HepG2 (cell line): ENCODE measurements at regions of chr5 and their contacts with region 1.

Region 1: GRCh38 chr5:58022055-58022454 is 437.8 kb downstream of the PLK2 start:
- DNase-seq: no peak
- ATAC-seq: no peak
- H3K4me3 ChIP-seq: no peak overlapping the region
- H3K27ac ChIP-seq: no peak overlapping the region
- H3K4me1 ChIP-seq: no peaks in the 10 kb centered on the region
- H3K27me3 ChIP-seq: no peaks in the 10 kb centered on the region
- CTCF ChIP-seq: no peak
- EP300 ChIP-seq: no peak
- POLR2A ChIP-seq: no peak
- RAD21 ChIP-seq: no peak

Region 2: GRCh38 chr5:57072218-57072901 is 949.7 kb before region 1 on chr5:
- CTCF ChIA-PET with region 1: no interaction called
- POLR2A ChIA-PET with region 1: no interaction called
- in situ Hi-C with region 1: no loop called
- intact Hi-C with region 1: no loop called
- DNase-seq: peak; percentile 22
- ATAC-seq: peak; percentile 71
- H3K4me3 ChIP-seq: no peak overlapping the region
- H3K27ac ChIP-seq: no peak overlapping the region
- H3K4me1 ChIP-seq: peaks cover 23% of the 10 kb centered on the region
- H3K27me3 ChIP-seq: no peaks in the 10 kb centered on the region
- CTCF ChIP-seq: no peak
- EP300 ChIP-seq: no peak
- POLR2A ChIP-seq: no peak
- RAD21 ChIP-seq: no peak

Region 3: DNA sequence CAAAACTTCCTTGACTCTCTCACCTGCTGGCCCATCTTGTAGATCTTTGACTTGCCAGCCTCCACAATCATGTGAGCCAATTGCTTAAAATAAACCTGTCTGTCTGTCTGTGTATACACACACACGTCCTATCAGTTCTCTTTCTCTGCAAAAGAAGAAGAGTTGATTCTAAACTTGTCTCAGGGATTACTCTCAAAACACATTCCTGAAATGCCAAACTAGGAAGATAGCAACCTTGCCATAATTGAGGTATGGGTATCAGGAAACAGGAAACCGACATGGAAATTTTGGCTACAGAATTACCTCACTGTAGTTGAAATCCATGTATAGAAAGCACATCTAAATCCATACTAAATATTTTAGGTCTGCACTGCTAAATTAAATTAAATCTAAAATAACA is 45.5 kb before region 1 on chr5:
- CTCF ChIA-PET with region 1: no interaction called
- POLR2A ChIA-PET with region 1: no interaction called
- in situ Hi-C with region 1: no loop called
- intact Hi-C with region 1: no loop called
- DNase-seq: no peak
- ATAC-seq: no peak
- H3K4me3 ChIP-seq: no peak overlapping the region
- H3K27ac ChIP-seq: no peak overlapping the region
- H3K4me1 ChIP-seq: no peaks in the 10 kb centered on the region
- H3K27me3 ChIP-seq: no peaks in the 10 kb centered on the region
- CTCF ChIP-seq: no peak
- EP300 ChIP-seq: no peak
- POLR2A ChIP-seq: no peak
- RAD21 ChIP-seq: no peak

Region 4: DNA sequence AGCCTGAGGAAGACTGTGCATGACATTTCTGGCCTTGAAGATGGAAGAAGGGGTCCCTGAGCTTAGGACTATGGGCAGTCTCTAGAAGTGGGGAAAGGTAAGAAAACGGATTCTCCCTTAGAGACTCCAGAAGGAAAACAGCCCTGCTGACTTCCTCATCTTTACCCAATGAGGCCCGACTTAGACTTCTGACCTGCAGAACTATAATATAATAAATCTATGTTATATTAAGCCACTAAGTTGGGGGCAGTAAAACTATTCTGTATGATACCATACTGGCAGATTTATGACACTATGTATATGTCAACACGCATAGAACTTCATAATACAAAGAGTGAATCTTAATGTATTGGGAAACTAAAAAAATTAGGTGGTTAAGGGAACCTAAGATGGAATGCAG is 15.8 kb after region 1 on chr5:
- CTCF ChIA-PET with region 1: no interaction called
- POLR2A ChIA-PET with region 1: no interaction called
- in situ Hi-C with region 1: no loop called
- intact Hi-C with region 1: loop called (anchors 1 kb)
- DNase-seq: no peak
- ATAC-seq: no peak
- H3K4me3 ChIP-seq: no peak overlapping the region
- H3K27ac ChIP-seq: no peak overlapping the region
- H3K4me1 ChIP-seq: no peaks in the 10 kb centered on the region
- H3K27me3 ChIP-seq: no peaks in the 10 kb centered on the region
- CTCF ChIP-seq: no peak
- EP300 ChIP-seq: no peak
- POLR2A ChIP-seq: no peak
- RAD21 ChIP-seq: no peak